GM23248 (cell line): ENCODE measurements at regions of chr7 and their contacts with region 1.

Region 1: GRCh38 chr7:7424151-7424873 is 111.4 kb downstream of the COL28A1 start:
- DNase-seq: peak; percentile 85
- H3K4me3 ChIP-seq: peak overlapping the region; percentile 87
- H3K27ac ChIP-seq: no peak overlapping the region
- H3K4me1 ChIP-seq: peaks cover 11% of the 10 kb centered on the region
- H3K27me3 ChIP-seq: no peaks in the 10 kb centered on the region

Region 2: GRCh38 chr7:7103343-7104313 is 320.7 kb before region 1 on chr7:
- in situ Hi-C with region 1: loop called (anchors 25 kb)
- DNase-seq: peak; percentile 78
- H3K4me3 ChIP-seq: peak overlapping the region; percentile 17; the same call in 1 of the 2 replicates
- H3K27ac ChIP-seq: no peak overlapping the region
- H3K4me1 ChIP-seq: peaks cover 12% of the 10 kb centered on the region
- H3K27me3 ChIP-seq: no peaks in the 10 kb centered on the region

Region 3: GRCh38 chr7:7535691-7536090 is 111.4 kb after region 1 on chr7 and contains the start of gene COL28A1:
- in situ Hi-C with region 1: loop called (anchors 5 kb)
- DNase-seq: no peak
- H3K4me3 ChIP-seq: no peak within 1 kb of the TSS
- H3K27ac ChIP-seq: no peak within 1 kb of the TSS
- H3K4me1 ChIP-seq: no peaks in the 10 kb centered on the region
- H3K27me3 ChIP-seq: no peaks in the 10 kb centered on the region
- total RNA-seq, gene COL28A1: not detected in 2 replicates

Region 4: DNA sequence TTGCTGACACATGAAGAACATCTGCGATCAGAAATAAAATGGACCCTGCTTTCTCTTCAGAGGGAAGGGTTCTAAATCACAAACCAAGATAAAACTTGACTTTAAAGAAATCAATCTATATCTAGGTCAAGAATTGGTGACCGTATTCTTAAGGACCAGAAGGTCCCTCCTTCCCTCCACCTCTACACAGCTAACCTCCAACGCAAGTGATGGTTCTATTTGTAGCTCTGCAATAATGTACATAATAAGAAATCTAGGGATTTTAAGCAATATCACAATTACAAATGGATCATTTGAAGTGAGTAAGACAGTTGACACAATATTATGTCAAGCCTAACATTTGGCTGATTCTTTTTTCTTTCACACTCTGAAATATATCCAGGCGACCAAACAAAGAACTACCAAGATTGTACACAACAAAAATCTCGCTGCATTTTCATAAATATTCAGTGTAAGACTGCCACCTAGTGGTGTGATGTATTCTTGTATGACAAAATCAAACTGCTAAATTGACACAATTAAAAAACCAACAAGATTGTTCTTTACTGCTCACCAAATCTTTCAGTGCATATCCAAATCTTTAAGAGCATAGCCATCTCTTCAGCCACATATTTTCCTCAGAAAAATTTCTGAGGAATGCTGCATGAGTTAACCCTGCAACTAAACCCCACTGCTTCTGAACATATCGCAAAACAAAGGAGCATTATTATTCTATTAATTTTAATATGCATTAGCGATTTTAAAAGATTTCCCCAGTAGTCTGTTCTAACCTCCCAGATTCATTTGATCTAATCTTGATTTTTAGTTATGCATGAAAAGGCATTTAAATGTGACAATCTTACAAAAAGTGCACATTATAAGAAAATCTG is 793.1 kb after region 1 on chr7:
- in situ Hi-C with region 1: loop called (anchors 25 kb)
- DNase-seq: peak; percentile 81
- H3K4me3 ChIP-seq: no peak overlapping the region
- H3K27ac ChIP-seq: no peak overlapping the region
- H3K4me1 ChIP-seq: no peaks in the 10 kb centered on the region
- H3K27me3 ChIP-seq: peaks cover 4% of the 10 kb centered on the region